Heart left ventricle (tissue), 16 donors: ENCODE measurements at regions of chr12 and their contacts with region 1.

Region 1: GRCh38 chr12:14356147-14356546 is 9.3 kb upstream of the ATF7IP start:
- DNase-seq: no peak
- ATAC-seq: no peak
- H3K4me3 ChIP-seq: no peak overlapping the region
- H3K27ac ChIP-seq: no peak overlapping the region
- H3K4me1 ChIP-seq: no peaks in the 10 kb centered on the region
- H3K27me3 ChIP-seq: no peaks in the 10 kb centered on the region
- CTCF ChIP-seq: no peak
- POLR2A ChIP-seq: no peak

Region 2: DNA sequence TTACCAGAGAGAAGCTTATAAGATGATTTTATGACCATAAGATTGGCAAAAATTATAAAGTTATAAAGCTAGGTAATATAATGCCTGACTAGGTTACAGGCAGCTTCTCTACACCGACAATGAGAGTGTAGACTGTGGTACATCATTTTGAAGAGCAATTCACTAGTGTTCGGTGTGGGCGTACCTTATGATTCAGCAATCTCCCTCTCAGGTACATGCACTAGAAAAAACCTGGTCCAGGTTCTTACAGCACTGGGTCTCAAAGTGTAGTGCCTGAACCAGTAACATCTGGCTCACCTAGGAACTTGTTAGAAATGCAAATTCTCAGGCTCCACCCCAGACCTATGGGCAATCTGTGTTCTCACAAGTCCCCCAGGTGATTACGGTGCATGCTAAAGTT is 758.4 kb after region 1 on chr12:
- intact Hi-C with region 1: loop called in 1 of 10 experiments (anchors 10 kb)
- DNase-seq: no peak
- ATAC-seq: no peak
- H3K4me3 ChIP-seq: no peak overlapping the region
- H3K27ac ChIP-seq: no peak overlapping the region
- H3K4me1 ChIP-seq: peaks cover 0 to 16% (median 0%) of the 10 kb centered on the region in 12 donors
- H3K27me3 ChIP-seq: no peaks in the 10 kb centered on the region
- CTCF ChIP-seq: no peak
- POLR2A ChIP-seq: no peak